Activated T-helper 2 cell treated with anti-CD3 and anti-CD28 coated beads, Interferon-gamma antibody, Interleukin-2, Interleukin-4, amounts not matched to agents 10 μg/mL and 5 μg/mL and 100 μg/mL, durations not matched to agents 14 hours and 24 hours and 36 hours (primary cell): ENCODE measurements at regions of chr12 and their contacts with region 1.

Region 1: DNA sequence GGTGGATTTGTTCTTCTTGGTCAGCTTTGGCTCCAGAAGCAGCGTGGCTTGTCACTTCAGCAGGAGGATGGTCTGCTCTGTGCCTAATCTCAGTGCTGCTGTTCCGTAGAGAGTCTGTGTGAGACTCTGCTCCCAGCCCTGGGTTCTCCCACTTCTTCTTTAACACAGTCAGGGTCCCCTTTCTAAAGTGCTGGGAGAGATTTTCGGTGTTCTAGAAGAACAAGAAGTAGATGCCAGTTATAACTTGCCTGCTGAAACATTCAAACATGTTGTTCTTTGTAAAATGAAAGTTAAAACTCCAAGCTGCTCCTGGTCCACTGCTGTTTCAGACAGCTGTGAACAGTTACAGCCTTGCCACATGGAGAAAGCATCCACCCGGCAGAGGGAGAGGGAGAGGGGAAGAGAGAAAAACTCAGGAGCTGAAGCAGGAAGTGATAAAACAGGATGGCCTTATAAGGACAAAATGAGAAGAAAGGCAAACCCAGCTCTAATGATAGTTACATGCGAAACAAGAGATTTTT is 55.2 kb upstream of the CERS5 start:
- DNase-seq: no peak
- H3K4me3 Mint-ChIP-seq: no peak overlapping the region
- H3K27ac Mint-ChIP-seq: no peak overlapping the region
- H3K4me1 Mint-ChIP-seq: peaks cover 28% of the 10 kb centered on the region
- H3K27me3 Mint-ChIP-seq: no peaks in the 10 kb centered on the region

Region 2: DNA sequence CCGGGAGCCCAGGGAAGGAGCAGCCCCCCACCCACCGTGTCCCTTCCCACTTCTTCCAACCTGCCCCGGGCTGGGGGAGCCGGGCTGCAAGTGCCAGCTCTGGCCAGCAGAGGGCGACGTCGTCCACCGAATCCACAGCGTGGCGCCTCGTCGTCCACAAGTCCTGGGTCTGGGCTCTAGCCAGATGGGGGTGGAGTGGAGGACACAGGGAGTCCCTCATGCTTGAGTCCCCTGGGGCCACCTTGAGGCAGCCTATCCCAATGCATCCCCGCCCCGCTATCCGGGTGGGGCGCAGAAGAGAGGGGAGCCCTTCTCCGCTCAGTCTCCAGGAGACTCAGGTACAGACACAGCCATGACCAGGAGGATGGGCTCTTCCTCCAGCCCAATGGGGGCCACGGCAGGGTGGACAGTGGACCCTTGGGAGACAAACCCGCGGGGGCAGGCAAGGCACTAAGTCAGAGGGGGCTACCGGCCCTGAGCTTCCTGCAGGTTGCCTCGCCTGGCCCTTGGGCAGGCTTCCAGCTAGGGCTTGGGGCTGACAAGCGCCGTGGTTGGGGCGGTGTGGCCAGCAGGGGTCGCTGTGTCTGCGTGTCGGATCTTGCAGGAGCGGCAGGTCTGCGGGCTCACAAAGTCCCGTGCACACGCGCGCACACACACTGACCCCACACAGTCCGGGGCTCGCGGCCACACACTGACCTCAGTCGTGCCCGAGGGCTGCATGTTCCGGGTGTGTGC is 255.1 kb before region 1 on chr12:
- intact Hi-C with region 1: no loop called
- DNase-seq: peak; percentile 86
- H3K4me3 Mint-ChIP-seq: peak overlapping the region; percentile 63
- H3K27ac Mint-ChIP-seq: no peak overlapping the region
- H3K4me1 Mint-ChIP-seq: peaks cover 6% of the 10 kb centered on the region
- H3K27me3 Mint-ChIP-seq: peaks cover 32% of the 10 kb centered on the region

Region 3: GRCh38 chr12:50246873-50247612 is 24.7 kb after region 1 on chr12:
- intact Hi-C with region 1: loop called (anchors 1 kb)
- DNase-seq: peak; percentile 40
- H3K4me3 Mint-ChIP-seq: peak overlapping the region; percentile 89
- H3K27ac Mint-ChIP-seq: peak overlapping the region; percentile 89
- H3K4me1 Mint-ChIP-seq: peaks cover 65% of the 10 kb centered on the region
- H3K27me3 Mint-ChIP-seq: no peaks in the 10 kb centered on the region

Region 4: DNA sequence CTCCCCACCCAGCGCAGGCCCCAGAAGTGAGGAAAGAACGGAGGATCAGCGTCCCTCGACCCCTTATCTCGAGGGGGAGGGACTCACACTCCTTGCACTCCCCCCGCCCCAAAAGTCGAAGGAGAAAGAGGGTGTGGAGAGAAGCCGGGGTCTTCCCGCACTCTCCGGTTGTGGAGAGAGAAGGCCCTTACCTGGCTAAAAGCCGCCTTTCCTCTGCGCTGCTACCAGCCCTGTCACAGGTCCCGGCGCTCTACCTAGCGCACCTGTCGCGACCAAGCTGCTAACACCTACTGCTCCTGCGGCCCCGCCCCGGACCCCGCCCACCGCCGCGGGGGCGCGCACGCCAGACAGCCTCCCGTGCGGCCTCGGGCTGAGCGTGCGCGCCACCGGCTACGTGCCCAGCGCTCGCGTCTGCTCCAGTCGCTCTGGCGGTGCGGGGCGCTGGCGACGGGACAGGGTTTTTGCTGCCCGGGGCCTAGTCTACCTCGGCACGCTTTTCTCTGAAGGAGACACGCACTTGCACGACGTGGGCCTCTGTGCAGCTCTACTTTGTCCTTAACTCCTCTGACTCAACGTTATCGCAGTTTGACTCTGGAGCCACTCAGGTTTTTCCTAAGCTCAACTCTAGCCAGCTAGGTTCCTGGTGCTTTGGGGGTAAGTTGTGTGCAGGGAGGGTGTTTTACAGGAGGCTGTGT is 61.0 kb after region 1 on chr12 and contains the start of gene LIMA1:
- intact Hi-C with region 1: loop called (anchors 1 kb)
- DNase-seq: peak; percentile 88
- H3K4me3 Mint-ChIP-seq: peak within 1 kb of the TSS; percentile 92
- H3K27ac Mint-ChIP-seq: peak within 1 kb of the TSS; percentile 77
- H3K4me1 Mint-ChIP-seq: peaks cover 31% of the 10 kb centered on the region
- H3K27me3 Mint-ChIP-seq: no peaks in the 10 kb centered on the region
- total RNA-seq, gene LIMA1: 331 and 333 TPM in 2 replicates